CD14-positive monocyte (primary cell): ENCODE measurements at regions of chr9 and their contacts with region 1.

Region 1: GRCh38 chr9:107172160-107172978 is 110.7 kb upstream of the RAD23B start:
- DNase-seq: peak; percentile 35 to 53 (median 42)
- H3K4me3 ChIP-seq: no peak overlapping the region
- H3K4me3 Mint-ChIP-seq: no peak overlapping the region
- H3K27ac ChIP-seq: no peak overlapping the region
- H3K27ac Mint-ChIP-seq: no peak overlapping the region
- H3K4me1 ChIP-seq: no peaks in the 10 kb centered on the region
- H3K4me1 Mint-ChIP-seq: no peaks in the 10 kb centered on the region
- H3K27me3 ChIP-seq: no peaks in the 10 kb centered on the region
- H3K27me3 Mint-ChIP-seq: peaks cover 0 to 1% (median 0%) of the 10 kb centered on the region in 3 donors
- CTCF ChIP-seq: peak; percentile 89

Region 2: GRCh38 chr9:105842023-105842644 is 1330.2 kb before region 1 on chr9:
- intact Hi-C with region 1: loop called (anchors 10 kb)
- DNase-seq: peak; percentile 3 to 17 (median 14)
- H3K4me3 ChIP-seq: no peak overlapping the region
- H3K4me3 Mint-ChIP-seq: no peak overlapping the region
- H3K27ac ChIP-seq: no peak overlapping the region
- H3K27ac Mint-ChIP-seq: no peak overlapping the region
- H3K4me1 ChIP-seq: no peaks in the 10 kb centered on the region
- H3K4me1 Mint-ChIP-seq: no peaks in the 10 kb centered on the region
- H3K27me3 ChIP-seq: no peaks in the 10 kb centered on the region
- H3K27me3 Mint-ChIP-seq: no peaks in the 10 kb centered on the region
- CTCF ChIP-seq: peak; percentile 99